ENCODE measurements at regions of chrX and their contacts with region 1.

Region 1: DNA sequence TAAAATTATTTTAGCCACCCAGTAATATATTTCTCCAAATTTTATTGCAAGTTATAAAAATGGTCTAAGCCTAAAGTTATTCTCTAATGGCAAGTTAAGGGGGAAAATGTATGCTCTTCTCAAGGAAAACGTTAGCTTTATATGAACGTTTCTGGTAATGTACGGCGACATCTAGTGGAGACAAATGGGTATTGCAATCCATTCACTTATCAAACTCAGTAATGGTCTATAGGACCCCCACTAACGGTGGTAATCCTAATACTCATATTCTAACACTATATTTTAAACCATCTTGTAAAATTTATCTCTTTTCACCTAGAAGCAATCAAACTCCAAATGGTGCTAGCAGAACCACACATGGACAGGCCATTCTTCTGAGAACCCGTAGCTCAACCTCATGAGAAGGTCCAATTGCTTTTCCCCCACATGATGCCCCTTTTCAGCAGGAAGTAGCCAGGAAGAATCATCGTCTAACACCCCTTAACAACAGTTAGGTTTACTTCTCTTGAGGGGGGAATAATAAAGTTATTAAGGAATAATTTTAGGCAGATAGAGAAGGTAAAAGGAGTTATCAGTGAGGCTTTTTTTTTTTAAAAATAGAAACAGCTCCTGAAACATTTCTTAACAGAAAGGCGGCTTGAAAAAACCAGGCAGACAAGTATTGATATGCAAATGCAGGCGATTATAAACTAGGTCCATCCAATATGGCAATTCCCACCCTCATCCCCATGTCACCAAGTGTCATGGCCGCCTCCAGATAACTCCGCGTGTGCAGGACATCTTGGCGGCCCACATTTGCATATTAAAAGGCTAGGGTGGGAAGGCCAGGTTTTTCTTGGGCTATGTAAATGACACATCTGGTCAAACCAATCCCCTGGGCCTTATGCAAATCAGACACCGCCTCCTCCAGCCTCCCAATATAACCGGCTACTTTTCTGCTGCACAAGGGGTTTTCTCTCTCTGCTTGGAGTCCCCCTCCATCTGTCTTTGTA is 35.0 kb downstream of the NUDT11 start:
- DNase-seq: peak in 1 of 2 donors; percentile 6
- ATAC-seq: no peak
- H3K4me3 ChIP-seq: no peak overlapping the region
- H3K27ac ChIP-seq: no peak overlapping the region
- H3K4me1 ChIP-seq: no peaks in the 10 kb centered on the region
- H3K27me3 ChIP-seq: peaks cover 0 to 55% (median 0%) of the 10 kb centered on the region in 7 donors
- CTCF ChIP-seq: peak; percentile 50 to 91 (median 67)

Region 2: DNA sequence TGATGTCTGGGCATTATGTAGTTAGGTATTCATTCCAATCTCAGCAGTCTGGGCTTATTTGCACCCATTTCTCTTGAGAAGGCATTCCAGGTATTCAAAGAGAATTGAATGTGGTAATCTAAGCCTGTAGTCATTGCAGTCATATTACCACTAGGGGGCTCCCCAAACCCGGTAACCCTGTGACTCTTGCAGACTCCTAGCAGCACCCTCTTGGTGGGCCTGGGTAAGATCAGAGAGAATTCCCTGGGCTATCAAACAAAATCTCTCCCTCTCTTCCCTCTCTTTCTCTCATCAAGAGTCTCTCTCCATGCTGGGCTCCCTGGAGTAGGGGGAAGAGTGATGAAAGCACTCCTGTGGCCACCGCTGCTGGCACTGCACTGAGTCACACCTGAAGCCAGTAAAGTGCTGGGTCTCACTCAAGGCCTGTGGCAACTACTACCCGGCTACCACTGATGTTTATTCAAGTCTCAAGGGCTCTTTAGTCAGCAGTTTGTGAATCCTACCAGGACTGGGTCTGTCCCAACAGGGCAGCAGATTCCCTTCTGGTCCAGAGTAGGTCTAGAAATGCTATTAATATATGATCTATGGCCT is 316.4 kb before region 1 on chrX:
- intact Hi-C with region 1: loop called in 2 of 10 experiments (anchors 10 kb)
- DNase-seq: no peak
- ATAC-seq: no peak
- H3K4me3 ChIP-seq: no peak overlapping the region
- H3K27ac ChIP-seq: no peak overlapping the region
- H3K4me1 ChIP-seq: no peaks in the 10 kb centered on the region
- H3K27me3 ChIP-seq: peaks cover 0 to 81% (median 0%) of the 10 kb centered on the region in 7 donors
- CTCF ChIP-seq: peak in 8 of 9 donors; percentile 7 to 67 (median 46)

Measured in heart right ventricle (tissue), 16 donors.